ENCODE measurements at regions of chr7 and their contacts with region 1.

Region 1: DNA sequence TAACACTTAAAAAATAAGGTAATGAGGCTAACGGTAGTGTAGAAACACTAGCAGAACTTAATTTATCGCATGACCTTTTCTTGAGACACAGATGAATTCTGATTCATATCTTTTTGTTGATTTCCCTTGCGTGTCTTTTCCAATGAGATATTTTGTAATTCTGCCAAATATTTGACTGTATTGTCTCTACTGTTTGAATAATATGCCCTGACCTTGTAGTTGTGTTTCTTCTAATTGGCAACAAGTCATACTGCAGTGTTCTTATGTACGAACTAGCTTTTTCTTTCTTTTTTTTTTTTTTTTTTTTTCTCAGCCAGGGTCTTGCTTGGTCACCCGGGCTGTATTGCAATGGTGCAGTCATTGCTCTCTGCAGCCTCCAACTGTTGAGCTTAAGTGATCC is 9.3 kb upstream of the ABCB1 start:
- DNase-seq: no peak
- ATAC-seq: no peak
- H3K4me3 ChIP-seq: no peak overlapping the region
- H3K27ac ChIP-seq: no peak overlapping the region
- H3K4me1 ChIP-seq: no peaks in the 10 kb centered on the region
- H3K27me3 ChIP-seq: peaks cover 2% of the 10 kb centered on the region; the same call in 1 of the 2 replicates
- CTCF ChIP-seq: no peak
- POLR2A ChIP-seq: no peak
- RAD21 ChIP-seq: no peak

Region 2: DNA sequence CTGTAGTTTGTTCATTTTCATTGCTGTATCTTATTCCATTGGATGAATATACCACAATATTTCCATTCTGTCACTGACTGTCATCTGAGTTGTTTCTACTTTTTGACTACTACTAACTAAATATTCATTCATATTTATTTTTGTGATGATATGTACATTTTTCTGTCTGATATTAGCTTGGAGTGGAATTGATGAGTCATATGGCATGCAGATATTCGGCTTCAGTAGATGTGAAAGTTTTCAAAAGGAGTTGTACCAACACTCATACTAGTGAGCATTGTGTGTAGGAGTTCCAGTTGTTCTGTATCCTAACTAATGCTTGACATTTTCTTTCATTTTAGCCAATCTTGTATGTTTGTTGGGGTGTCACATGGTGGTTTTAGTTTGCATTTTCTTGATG is 26.0 kb after region 1 on chr7:
- CTCF ChIA-PET with region 1: no interaction called
- POLR2A ChIA-PET with region 1: interaction called, 27 read pairs
- dilution Hi-C with region 1: no loop called
- in situ Hi-C with region 1: no loop called
- intact Hi-C with region 1: no loop called
- DNase-seq: no peak
- ATAC-seq: no peak
- H3K4me3 ChIP-seq: no peak overlapping the region
- H3K27ac ChIP-seq: no peak overlapping the region
- H3K4me1 ChIP-seq: no peaks in the 10 kb centered on the region
- H3K27me3 ChIP-seq: no peaks in the 10 kb centered on the region
- CTCF ChIP-seq: no peak
- POLR2A ChIP-seq: no peak
- RAD21 ChIP-seq: no peak

Region 3: GRCh38 chr7:88062238-88062637 is 452.3 kb after region 1 on chr7:
- CTCF ChIA-PET with region 1: no interaction called
- POLR2A ChIA-PET with region 1: no interaction called
- dilution Hi-C with region 1: no loop called
- in situ Hi-C with region 1: no loop called
- intact Hi-C with region 1: no loop called
- DNase-seq: no peak
- ATAC-seq: no peak
- H3K4me3 ChIP-seq: no peak overlapping the region
- H3K27ac ChIP-seq: no peak overlapping the region
- H3K4me1 ChIP-seq: no peaks in the 10 kb centered on the region
- H3K27me3 ChIP-seq: no peaks in the 10 kb centered on the region
- CTCF ChIP-seq: no peak
- POLR2A ChIP-seq: no peak
- RAD21 ChIP-seq: no peak

Measured in IMR-90 (cell line).